ENCODE measurements at regions of chr13 and their contacts with region 1.

Region 1: GRCh38 chr13:26698392-26699196 is 62.0 kb downstream of the GPR12 start:
- DNase-seq: peak; percentile 69
- H3K4me3 ChIP-seq: no peak overlapping the region
- H3K27ac ChIP-seq: no peak overlapping the region
- H3K4me1 ChIP-seq: peaks cover 3% of the 10 kb centered on the region
- H3K27me3 ChIP-seq: no peaks in the 10 kb centered on the region
- CTCF ChIP-seq: peak; percentile 88 to 95

Region 2: GRCh38 chr13:25574437-25575411 is 1123.9 kb before region 1 on chr13:
- CTCF ChIA-PET with region 1: no interaction called
- dilution Hi-C with region 1: no loop called
- in situ Hi-C with region 1: no loop called
- intact Hi-C with region 1: loop called (anchors 5 kb)
- DNase-seq: peak; percentile 76
- H3K4me3 ChIP-seq: no peak overlapping the region
- H3K27ac ChIP-seq: no peak overlapping the region
- H3K4me1 ChIP-seq: no peaks in the 10 kb centered on the region
- H3K27me3 ChIP-seq: no peaks in the 10 kb centered on the region
- CTCF ChIP-seq: peak; percentile 96

Region 3: GRCh38 chr13:26132756-26133155 is 565.8 kb before region 1 on chr13:
- CTCF ChIA-PET with region 1: no interaction called
- dilution Hi-C with region 1: no loop called
- in situ Hi-C with region 1: no loop called
- intact Hi-C with region 1: loop called (anchors 1 kb)
- DNase-seq: peak; percentile 3
- H3K4me3 ChIP-seq: no peak overlapping the region
- H3K27ac ChIP-seq: no peak overlapping the region
- H3K4me1 ChIP-seq: no peaks in the 10 kb centered on the region
- H3K27me3 ChIP-seq: no peaks in the 10 kb centered on the region
- CTCF ChIP-seq: peak; percentile 24 to 49

Region 4: DNA sequence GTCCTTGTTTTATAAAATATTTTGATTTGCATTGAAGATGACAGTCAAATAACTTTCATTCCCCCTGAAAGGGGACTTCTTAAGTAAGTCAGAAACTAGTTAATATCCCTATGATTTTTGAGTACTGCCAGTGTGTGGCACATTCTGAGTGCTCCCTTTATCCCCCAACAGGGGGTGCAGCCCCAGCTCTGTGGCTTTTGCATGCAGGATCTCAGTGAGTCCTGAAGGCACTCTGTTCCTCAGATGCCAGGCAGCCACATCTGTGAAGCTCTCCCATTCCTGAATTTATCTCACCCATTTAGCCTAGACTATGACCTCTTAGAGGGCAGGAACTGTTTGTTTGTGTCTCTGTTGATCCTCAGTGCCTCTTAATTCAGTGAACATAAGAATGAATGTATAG is 321.6 kb before region 1 on chr13:
- CTCF ChIA-PET with region 1: no interaction called
- dilution Hi-C with region 1: no loop called
- in situ Hi-C with region 1: no loop called
- intact Hi-C with region 1: loop called (anchors 1 kb)
- DNase-seq: peak; percentile 4
- H3K4me3 ChIP-seq: no peak overlapping the region
- H3K27ac ChIP-seq: no peak overlapping the region
- H3K4me1 ChIP-seq: no peaks in the 10 kb centered on the region
- H3K27me3 ChIP-seq: no peaks in the 10 kb centered on the region
- CTCF ChIP-seq: peak; percentile 49 to 53

Region 5: GRCh38 chr13:26498656-26499591 is 199.7 kb before region 1 on chr13:
- CTCF ChIA-PET with region 1: interaction called, 8 read pairs
- dilution Hi-C with region 1: no loop called
- in situ Hi-C with region 1: no loop called
- intact Hi-C with region 1: loop called (anchors 1 kb)
- DNase-seq: no peak
- H3K4me3 ChIP-seq: no peak overlapping the region
- H3K27ac ChIP-seq: no peak overlapping the region
- H3K4me1 ChIP-seq: peaks cover 21% of the 10 kb centered on the region
- H3K27me3 ChIP-seq: no peaks in the 10 kb centered on the region
- CTCF ChIP-seq: no peak

Region 6: DNA sequence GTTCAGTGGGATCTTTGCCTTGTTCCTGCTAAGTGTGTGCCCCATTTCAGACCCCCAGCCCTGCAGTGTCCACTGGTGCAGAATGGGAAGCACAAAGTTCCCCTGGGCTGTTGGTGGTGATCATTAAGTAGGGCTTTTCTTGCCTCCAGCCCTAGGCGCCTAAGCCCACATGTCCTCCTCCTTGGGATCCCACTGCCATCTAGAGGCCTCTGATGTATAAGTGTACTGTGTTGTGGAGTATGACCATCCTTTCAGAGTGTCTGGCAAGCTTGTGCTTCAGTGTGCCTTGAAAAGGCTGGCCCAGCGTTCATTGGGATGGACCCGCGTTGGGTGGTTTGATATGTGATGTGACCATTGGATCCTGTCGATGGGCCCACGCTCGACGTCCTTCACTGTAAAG is 69.9 kb before region 1 on chr13:
- CTCF ChIA-PET with region 1: interaction called, 4 read pairs
- dilution Hi-C with region 1: no loop called
- in situ Hi-C with region 1: no loop called
- intact Hi-C with region 1: loop called (anchors 1 kb)
- DNase-seq: peak; percentile 27
- H3K4me3 ChIP-seq: no peak overlapping the region
- H3K27ac ChIP-seq: no peak overlapping the region
- H3K4me1 ChIP-seq: no peaks in the 10 kb centered on the region
- H3K27me3 ChIP-seq: no peaks in the 10 kb centered on the region
- CTCF ChIP-seq: peak; percentile 23 to 60